Mammary epithelial cell (primary cell): ENCODE measurements at regions of chr17 and their contacts with region 1.

Region 1: GRCh38 chr17:38656959-38657823 is 17.6 kb downstream of the EPOP start:
- DNase-seq: no peak
- H3K4me3 ChIP-seq: no peak overlapping the region
- H3K27ac ChIP-seq: no peak overlapping the region
- H3K4me1 ChIP-seq: no peaks in the 10 kb centered on the region
- H3K27me3 ChIP-seq: no peaks in the 10 kb centered on the region
- CTCF ChIP-seq: no peak

Region 2: GRCh38 chr17:38598536-38598935 is 58.7 kb before region 1 on chr17:
- CTCF ChIA-PET with region 1: no interaction called
- dilution Hi-C with region 1: no loop called
- in situ Hi-C with region 1: loop called in 1 of 2 experiments (anchors 10 kb)
- intact Hi-C with region 1: no loop called
- DNase-seq: peak; percentile 84
- H3K4me3 ChIP-seq: no peak overlapping the region
- H3K27ac ChIP-seq: no peak overlapping the region
- H3K4me1 ChIP-seq: no peaks in the 10 kb centered on the region
- H3K27me3 ChIP-seq: peaks cover 11% of the 10 kb centered on the region
- CTCF ChIP-seq: no peak